Activated naive CD4-positive, alpha-beta T cell treated with anti-CD3 and anti-CD28 coated beads for 36 hours (primary cell): ENCODE measurements at regions of chr4 and their contacts with region 1.

Region 1: GRCh38 chr4:77734928-77735327 is 84.2 kb downstream of the CNOT6L start:
- DNase-seq: peak; percentile 49
- H3K4me3 Mint-ChIP-seq: peak overlapping the region; percentile 33
- H3K27ac Mint-ChIP-seq: peak overlapping the region; percentile 66
- H3K4me1 Mint-ChIP-seq: peaks cover 54% of the 10 kb centered on the region
- H3K27me3 Mint-ChIP-seq: no peaks in the 10 kb centered on the region

Region 2: GRCh38 chr4:77600521-77601451 is 134.1 kb before region 1 on chr4:
- CTCF ChIA-PET with region 1: no interaction called
- intact Hi-C with region 1: no loop called
- DNase-seq: peak; percentile 59
- H3K4me3 Mint-ChIP-seq: no peak overlapping the region
- H3K27ac Mint-ChIP-seq: no peak overlapping the region
- H3K4me1 Mint-ChIP-seq: peaks cover 13% of the 10 kb centered on the region
- H3K27me3 Mint-ChIP-seq: peaks cover 11% of the 10 kb centered on the region

Region 3: DNA sequence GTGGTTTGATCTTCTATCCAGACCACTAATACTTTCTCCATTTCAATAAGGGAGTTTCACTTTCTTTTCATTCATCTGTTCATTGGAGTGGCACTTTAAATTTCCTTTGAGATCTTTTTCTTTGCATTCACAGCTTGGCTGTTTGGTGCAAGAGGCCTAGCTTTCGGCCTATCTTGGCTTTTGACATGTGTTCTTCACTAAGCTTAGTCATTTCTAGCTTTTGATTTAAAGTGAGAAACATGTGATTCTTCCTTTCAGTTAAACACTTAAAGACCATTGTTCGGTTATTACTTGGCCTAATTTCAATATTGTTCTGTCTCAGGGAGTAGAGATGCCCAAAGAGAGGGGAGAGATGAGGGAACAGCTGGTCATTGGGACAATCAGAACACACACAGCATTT is 105.0 kb before region 1 on chr4:
- CTCF ChIA-PET with region 1: no interaction called
- intact Hi-C with region 1: no loop called
- DNase-seq: peak; percentile 37
- H3K4me3 Mint-ChIP-seq: no peak overlapping the region
- H3K27ac Mint-ChIP-seq: no peak overlapping the region
- H3K4me1 Mint-ChIP-seq: peaks cover 16% of the 10 kb centered on the region
- H3K27me3 Mint-ChIP-seq: no peaks in the 10 kb centered on the region

Region 4: DNA sequence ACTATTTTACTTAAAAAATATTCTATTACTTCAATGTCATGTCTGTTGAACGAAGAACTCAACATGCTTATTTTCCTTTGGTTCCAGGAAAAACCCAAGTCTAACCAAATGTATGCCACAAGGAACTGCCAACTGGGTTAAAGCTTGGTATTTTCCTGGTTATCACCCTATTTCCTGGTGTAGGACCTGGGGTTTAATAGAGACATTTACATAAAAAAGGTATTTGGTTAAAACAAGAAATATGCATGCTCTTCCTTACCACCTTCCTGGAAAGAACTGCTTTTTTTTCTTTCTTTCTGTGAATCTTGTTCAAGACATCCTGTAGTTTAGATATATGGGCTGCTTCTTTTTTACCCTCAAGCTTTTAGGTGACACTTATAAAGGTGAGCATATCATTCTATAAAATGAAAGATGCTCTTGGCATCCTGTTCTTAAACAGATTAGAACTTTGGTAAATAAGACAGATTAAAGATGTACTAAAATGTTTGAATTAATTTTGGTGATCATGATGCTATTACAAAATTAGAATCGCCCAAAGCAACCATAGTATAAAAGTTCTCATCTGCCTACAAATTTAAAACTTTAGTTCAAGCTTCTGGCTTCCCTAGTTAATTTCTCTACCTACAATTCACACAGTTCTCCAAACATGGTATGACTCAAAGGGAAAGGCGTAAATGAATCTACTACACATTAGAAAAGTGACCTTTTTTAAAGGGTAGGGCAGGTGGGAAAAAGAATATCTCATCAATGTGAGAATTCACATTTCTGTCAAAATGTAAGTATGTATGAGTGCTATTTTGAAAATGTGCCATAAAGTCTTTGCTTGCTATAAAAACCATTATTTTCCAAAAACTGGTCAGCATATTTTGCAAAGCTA is 19.3 kb before region 1 on chr4:
- CTCF ChIA-PET with region 1: interaction called, 4 read pairs
- intact Hi-C with region 1: loop called (anchors 2 kb)
- DNase-seq: no peak
- H3K4me3 Mint-ChIP-seq: no peak overlapping the region
- H3K27ac Mint-ChIP-seq: peak overlapping the region; percentile 53
- H3K4me1 Mint-ChIP-seq: peaks cover 33% of the 10 kb centered on the region
- H3K27me3 Mint-ChIP-seq: no peaks in the 10 kb centered on the region

Region 5: GRCh38 chr4:77777135-77777807 is 42.3 kb after region 1 on chr4:
- CTCF ChIA-PET with region 1: no interaction called
- intact Hi-C with region 1: loop called (anchors 5 kb)
- DNase-seq: no peak
- H3K4me3 Mint-ChIP-seq: no peak overlapping the region
- H3K27ac Mint-ChIP-seq: no peak overlapping the region
- H3K4me1 Mint-ChIP-seq: peaks cover 47% of the 10 kb centered on the region
- H3K27me3 Mint-ChIP-seq: no peaks in the 10 kb centered on the region